Mucosa of descending colon (tissue), 3 donors: ENCODE measurements at regions of chr3 and their contacts with region 1.

Region 1: DNA sequence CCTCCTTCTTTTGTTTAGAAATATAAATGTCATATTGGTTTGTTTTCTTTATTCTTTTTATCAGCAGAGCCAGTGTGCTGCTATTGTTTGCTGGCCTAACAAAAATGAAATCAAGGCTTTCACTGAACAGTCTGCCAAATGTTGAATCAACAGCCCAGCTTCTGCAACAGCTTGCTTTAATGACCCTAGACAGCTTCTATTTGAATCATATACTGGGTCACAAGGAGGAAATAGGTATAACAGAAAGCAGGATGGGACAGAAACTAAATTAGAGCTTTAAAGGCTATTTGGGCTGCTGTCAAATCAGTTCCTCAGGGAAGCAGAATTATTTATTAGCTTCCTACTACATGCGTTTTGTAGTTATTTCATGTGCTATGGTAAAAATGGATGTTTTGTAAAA is 12.1 kb upstream of the DNAJC13 start:
- DNase-seq: no peak
- ATAC-seq: peak; percentile 70
- H3K4me3 ChIP-seq: no peak overlapping the region
- H3K4me1 ChIP-seq: no peaks in the 10 kb centered on the region
- CTCF ChIP-seq: no peak

Region 2: GRCh38 chr3:132352541-132353143 is 52.5 kb before region 1 on chr3:
- intact Hi-C with region 1: loop called in 1 of 2 experiments (anchors 10 kb)
- DNase-seq: peak in 1 of 3 donors; percentile 86
- ATAC-seq: peak; percentile 91
- H3K4me3 ChIP-seq: no peak overlapping the region
- H3K4me1 ChIP-seq: no peaks in the 10 kb centered on the region
- CTCF ChIP-seq: peak; percentile 79